ENCODE measurements at regions of chr12 and their contacts with region 1.

Region 1: GRCh38 chr12:1830981-1831963 is 10.9 kb downstream of the LRTM2 start:
- DNase-seq: peak; percentile 42 to 61
- ATAC-seq: peak; percentile 71 to 92 (median 78)
- H3K4me3 ChIP-seq: no peak overlapping the region
- H3K27ac ChIP-seq: no peak overlapping the region
- H3K4me1 ChIP-seq: peaks cover 0 to 2% (median 0%) of the 10 kb centered on the region in 9 donors
- H3K27me3 ChIP-seq: peaks cover 0 to 87% (median 58%) of the 10 kb centered on the region in 7 donors
- CTCF ChIP-seq: no peak

Region 2: GRCh38 chr12:1916371-1917171 is 85.3 kb after region 1 on chr12:
- intact Hi-C with region 1: loop called in 2 of 10 experiments (anchors 5 kb)
- DNase-seq: peak; percentile 73 to 76
- ATAC-seq: peak; percentile 49 to 90 (median 78)
- H3K4me3 ChIP-seq: no peak overlapping the region
- H3K27ac ChIP-seq: no peak overlapping the region
- H3K4me1 ChIP-seq: peaks cover 5 to 30% (median 15%) of the 10 kb centered on the region in 9 donors
- H3K27me3 ChIP-seq: peaks cover 0 to 4% (median 0%) of the 10 kb centered on the region in 7 donors
- CTCF ChIP-seq: no peak